ENCODE measurements at regions of chr4 and their contacts with region 1.

Region 1: DNA sequence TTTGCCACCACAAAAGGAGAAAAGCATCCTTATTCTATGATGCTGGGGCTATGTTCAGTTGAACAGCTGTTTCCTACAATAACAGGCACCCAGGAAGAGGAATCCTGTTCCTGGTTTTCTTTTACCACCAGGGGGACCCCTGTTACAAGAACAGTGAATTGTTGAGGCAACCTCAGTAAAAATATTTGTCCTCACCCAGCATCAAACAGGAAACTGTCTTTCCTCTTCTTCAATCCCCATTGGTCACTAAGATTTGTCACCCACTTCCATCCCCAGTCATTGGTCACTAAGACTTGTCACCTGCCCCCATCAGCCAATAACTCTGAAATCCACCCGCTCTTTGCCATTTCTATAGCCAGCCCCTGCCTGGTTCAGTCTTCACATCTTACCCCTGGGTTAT is 143.5 kb upstream of the GALNT7 start:
- DNase-seq: peak; percentile 80
- H3K4me3 Mint-ChIP-seq: no peak overlapping the region
- H3K27ac Mint-ChIP-seq: no peak overlapping the region
- H3K4me1 Mint-ChIP-seq: peaks cover 2% of the 10 kb centered on the region
- H3K27me3 Mint-ChIP-seq: peaks cover 2% of the 10 kb centered on the region

Region 2: GRCh38 chr4:173257732-173258717 is 232.9 kb after region 1 on chr4:
- intact Hi-C with region 1: loop called (anchors 1 kb)
- DNase-seq: peak; percentile 87
- H3K4me3 Mint-ChIP-seq: no peak overlapping the region
- H3K27ac Mint-ChIP-seq: no peak overlapping the region
- H3K4me1 Mint-ChIP-seq: peaks cover 5% of the 10 kb centered on the region
- H3K27me3 Mint-ChIP-seq: no peaks in the 10 kb centered on the region

Region 3: GRCh38 chr4:173301518-173302201 is 276.5 kb after region 1 on chr4:
- intact Hi-C with region 1: loop called (anchors 1 kb)
- DNase-seq: peak; percentile 73
- H3K4me3 Mint-ChIP-seq: no peak overlapping the region
- H3K27ac Mint-ChIP-seq: no peak overlapping the region
- H3K4me1 Mint-ChIP-seq: no peaks in the 10 kb centered on the region
- H3K27me3 Mint-ChIP-seq: no peaks in the 10 kb centered on the region

Measured in activated CD4-positive, alpha-beta T cell treated with anti-CD3 and anti-CD28 coated beads, Interleukin-2, amount 10 ng/mL, durations not matched to agents 24 days and 14 days (primary cell).